ENCODE measurements at regions of chrX and their contacts with region 1.

Region 1: GRCh38 chrX:76253432-76253831 is 80.6 kb downstream of the PBDC1 start:
- DNase-seq: peak; percentile 75
- H3K4me3 Mint-ChIP-seq: no peak overlapping the region
- H3K27ac Mint-ChIP-seq: no peak overlapping the region
- H3K4me1 Mint-ChIP-seq: peaks cover 2% of the 10 kb centered on the region
- H3K27me3 Mint-ChIP-seq: peaks cover 5% of the 10 kb centered on the region

Region 2: GRCh38 chrX:76148753-76149152 is 104.7 kb before region 1 on chrX:
- intact Hi-C with region 1: loop called (anchors 5 kb)
- DNase-seq: peak; percentile 85
- H3K4me3 Mint-ChIP-seq: peak overlapping the region; percentile 78
- H3K27ac Mint-ChIP-seq: peak overlapping the region; percentile 99
- H3K4me1 Mint-ChIP-seq: peaks cover 14% of the 10 kb centered on the region
- H3K27me3 Mint-ChIP-seq: no peaks in the 10 kb centered on the region

Region 3: DNA sequence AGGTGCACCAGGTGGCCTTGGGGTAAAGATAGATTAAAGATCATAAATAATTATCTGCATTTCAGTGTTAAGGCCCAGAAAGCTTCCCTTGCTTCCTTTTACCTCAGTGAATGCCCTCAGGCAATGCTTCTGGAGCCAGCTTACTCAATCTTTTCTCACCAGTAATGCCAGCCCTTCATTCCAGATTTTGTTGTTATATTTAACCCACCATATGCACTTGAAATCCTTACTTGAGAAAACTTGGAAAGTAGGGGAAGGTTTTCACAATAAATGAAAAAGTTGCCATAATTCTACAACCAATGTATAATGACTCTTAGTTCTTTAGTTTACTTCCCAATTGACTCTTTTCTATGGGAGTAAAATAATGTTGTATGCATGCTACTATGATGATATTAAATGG is 97.6 kb before region 1 on chrX:
- intact Hi-C with region 1: loop called (anchors 5 kb)
- DNase-seq: no peak
- H3K4me3 Mint-ChIP-seq: no peak overlapping the region
- H3K27ac Mint-ChIP-seq: no peak overlapping the region
- H3K4me1 Mint-ChIP-seq: no peaks in the 10 kb centered on the region
- H3K27me3 Mint-ChIP-seq: peaks cover 2% of the 10 kb centered on the region